ENCODE measurements at regions of chr1 and their contacts with region 1.

Region 1: GRCh38 chr1:84433258-84434080 is 35.2 kb downstream of the DNASE2B start:
- DNase-seq: peak; percentile 72
- ATAC-seq: peak; percentile 76
- H3K4me3 Mint-ChIP-seq: peak overlapping the region; percentile 64
- H3K27ac Mint-ChIP-seq: peak overlapping the region; percentile 45
- H3K4me1 Mint-ChIP-seq: peaks cover 7% of the 10 kb centered on the region
- H3K27me3 Mint-ChIP-seq: no peaks in the 10 kb centered on the region
- CTCF ChIP-seq: peak; percentile 73

Region 2: GRCh38 chr1:83905315-83905907 is 528.1 kb before region 1 on chr1:
- CTCF ChIA-PET with region 1: interaction called, 4 read pairs
- POLR2A ChIA-PET with region 1: no interaction called
- intact Hi-C with region 1: loop called (anchors 10 kb)
- DNase-seq: peak; percentile 5
- ATAC-seq: no peak
- H3K4me3 Mint-ChIP-seq: no peak overlapping the region
- H3K27ac Mint-ChIP-seq: no peak overlapping the region
- H3K4me1 Mint-ChIP-seq: no peaks in the 10 kb centered on the region
- H3K27me3 Mint-ChIP-seq: peaks cover 14% of the 10 kb centered on the region
- CTCF ChIP-seq: peak; percentile 80

Region 3: DNA sequence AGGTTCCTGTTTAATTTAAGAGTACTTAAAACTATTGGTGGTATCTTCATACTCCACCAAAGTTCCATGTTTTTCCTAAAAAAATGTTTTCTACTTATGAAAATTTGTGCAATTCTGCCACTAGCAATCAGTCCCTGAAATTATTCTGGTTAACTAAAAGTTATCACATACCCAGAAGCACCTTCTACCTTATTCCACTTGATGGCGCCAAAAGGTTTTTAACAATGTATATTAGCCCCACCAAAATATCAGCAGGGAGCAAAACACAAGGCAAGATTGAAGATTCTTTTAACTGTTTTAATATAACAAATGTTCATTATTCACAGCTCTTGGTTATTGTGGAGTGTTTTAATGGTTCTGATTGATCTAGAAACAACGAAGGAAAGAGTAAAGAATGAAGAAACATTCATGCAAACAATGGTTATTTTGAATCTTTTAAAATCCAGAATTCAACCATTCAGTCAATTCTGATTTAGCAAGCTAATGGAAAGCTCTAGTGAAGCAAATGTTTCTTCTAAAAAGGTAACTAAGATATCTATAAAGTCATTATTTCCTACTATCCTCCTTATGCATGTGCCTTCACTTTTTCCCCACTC is 501.7 kb before region 1 on chr1:
- CTCF ChIA-PET with region 1: interaction called, 6 read pairs
- POLR2A ChIA-PET with region 1: no interaction called
- intact Hi-C with region 1: loop called (anchors 10 kb)
- DNase-seq: peak; percentile 25
- ATAC-seq: peak; percentile 73
- H3K4me3 Mint-ChIP-seq: no peak overlapping the region
- H3K27ac Mint-ChIP-seq: no peak overlapping the region
- H3K4me1 Mint-ChIP-seq: no peaks in the 10 kb centered on the region
- H3K27me3 Mint-ChIP-seq: peaks cover 5% of the 10 kb centered on the region
- CTCF ChIP-seq: peak; percentile 75

Region 4: DNA sequence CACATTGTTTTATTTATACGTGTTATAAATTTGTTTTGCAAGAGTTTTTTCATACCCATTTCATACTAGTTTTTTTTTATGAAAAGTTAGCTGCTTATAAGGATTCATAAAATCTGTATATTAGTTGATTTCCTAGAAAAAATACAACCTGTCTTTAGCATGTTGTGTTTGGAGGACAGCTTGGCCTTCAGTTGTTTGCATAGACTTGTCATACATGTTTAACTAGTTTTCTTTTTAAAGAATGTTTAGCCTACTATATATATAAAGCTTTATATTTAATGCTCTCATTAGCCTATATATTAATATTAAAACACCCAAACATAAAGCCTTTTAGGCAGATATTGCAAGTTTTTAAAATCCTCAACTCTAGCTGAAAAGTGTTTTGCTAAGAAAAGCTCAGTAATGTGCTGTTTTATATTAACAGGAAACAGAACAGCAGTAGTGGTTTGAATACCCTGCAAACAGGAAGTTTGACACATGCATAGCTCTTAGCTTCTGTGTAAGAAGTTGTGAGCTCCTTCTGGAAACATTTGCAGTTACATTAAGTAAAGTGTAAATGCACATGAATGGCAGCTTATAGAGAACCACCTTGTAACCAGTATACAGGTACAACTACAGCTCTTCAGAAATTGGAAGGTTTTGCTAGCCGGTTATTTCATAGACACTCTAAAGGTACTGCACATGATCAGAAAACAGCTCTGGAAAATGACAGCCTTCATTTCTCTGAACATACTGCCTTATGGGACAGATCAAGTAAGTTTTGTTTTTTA is 289.5 kb before region 1 on chr1 and contains the start of gene PRKACB:
- CTCF ChIA-PET with region 1: interaction called, 157 read pairs
- POLR2A ChIA-PET with region 1: interaction called, 3 read pairs
- intact Hi-C with region 1: loop called (anchors 2 kb)
- DNase-seq: no peak
- ATAC-seq: peak; percentile 89
- H3K4me3 Mint-ChIP-seq: peak within 1 kb of the TSS; percentile 83
- H3K27ac Mint-ChIP-seq: peak within 1 kb of the TSS; percentile 99
- H3K4me1 Mint-ChIP-seq: peaks cover 30% of the 10 kb centered on the region
- H3K27me3 Mint-ChIP-seq: no peaks in the 10 kb centered on the region
- CTCF ChIP-seq: no peak
- total RNA-seq, gene PRKACB: 39.9 to 44.7 TPM

Region 5: DNA sequence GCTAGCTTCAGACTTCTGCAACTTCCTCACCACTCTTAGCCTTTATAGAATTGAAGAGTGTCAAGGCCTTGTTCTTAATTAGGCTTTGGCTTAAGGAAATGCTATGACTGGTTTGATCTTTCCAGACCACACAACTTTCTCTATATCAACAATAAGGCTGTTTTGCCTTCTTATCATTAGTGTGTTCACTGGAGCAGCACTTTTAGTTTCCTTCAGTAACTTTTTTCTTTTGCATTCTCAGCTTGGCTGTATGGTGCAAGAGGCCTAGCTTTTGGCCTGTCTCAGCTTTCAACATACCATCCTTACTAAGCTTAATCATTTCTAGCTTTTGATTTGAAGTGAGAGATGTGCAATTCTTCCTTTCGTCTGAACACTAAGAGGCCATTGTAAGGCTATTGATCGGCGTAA is 280.8 kb before region 1 on chr1:
- CTCF ChIA-PET with region 1: interaction called, 157 read pairs
- POLR2A ChIA-PET with region 1: interaction called, 3 read pairs
- intact Hi-C with region 1: no loop called
- DNase-seq: peak; percentile 37
- ATAC-seq: peak; percentile 70
- H3K4me3 Mint-ChIP-seq: peak overlapping the region; percentile 36
- H3K27ac Mint-ChIP-seq: peak overlapping the region; percentile 81
- H3K4me1 Mint-ChIP-seq: peaks cover 83% of the 10 kb centered on the region
- H3K27me3 Mint-ChIP-seq: no peaks in the 10 kb centered on the region
- CTCF ChIP-seq: no peak

Region 6: GRCh38 chr1:84450910-84451309 is 17.4 kb after region 1 on chr1:
- CTCF ChIA-PET with region 1: no interaction called
- POLR2A ChIA-PET with region 1: no interaction called
- intact Hi-C with region 1: no loop called
- DNase-seq: no peak
- ATAC-seq: no peak
- H3K4me3 Mint-ChIP-seq: no peak overlapping the region
- H3K27ac Mint-ChIP-seq: no peak overlapping the region
- H3K4me1 Mint-ChIP-seq: no peaks in the 10 kb centered on the region
- H3K27me3 Mint-ChIP-seq: peaks cover 7% of the 10 kb centered on the region
- CTCF ChIP-seq: no peak

Region 7: DNA sequence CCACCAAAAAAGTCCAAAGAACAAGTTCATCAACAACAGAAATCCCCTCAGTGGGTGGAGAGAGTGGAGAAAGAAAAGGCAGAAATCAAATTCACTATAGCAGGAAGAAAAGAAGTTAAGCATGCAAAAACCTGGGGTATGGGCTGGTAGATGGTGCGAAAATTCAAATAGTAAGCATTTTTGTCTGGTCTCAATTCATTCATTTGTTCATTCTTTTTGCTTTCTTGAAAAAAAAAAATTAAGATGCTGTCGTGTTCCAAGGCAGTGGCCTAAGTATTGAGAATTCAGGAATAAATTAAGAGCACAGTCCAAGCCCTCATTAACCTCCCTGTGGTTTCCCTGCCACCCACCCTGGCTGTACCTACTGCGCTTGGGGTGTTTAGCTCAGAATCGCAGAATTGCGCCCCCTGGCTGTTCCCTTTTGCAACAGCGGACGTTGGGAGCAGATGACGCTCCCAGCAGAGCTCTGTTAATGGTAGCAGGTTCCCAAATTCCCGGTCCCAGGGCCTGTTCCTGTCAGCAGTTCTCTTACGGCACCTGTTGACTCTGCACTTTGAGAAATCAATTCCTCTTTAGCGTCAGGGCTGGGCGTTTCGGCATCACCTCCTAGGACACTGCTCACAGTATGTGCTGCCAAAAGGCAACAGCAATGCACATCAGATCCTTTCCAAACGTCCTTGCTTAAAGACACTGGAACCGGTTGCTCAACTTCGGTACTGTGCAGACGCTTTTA is 290.8 kb after region 1 on chr1:
- CTCF ChIA-PET with region 1: interaction called, 10 read pairs
- POLR2A ChIA-PET with region 1: no interaction called
- intact Hi-C with region 1: no loop called
- DNase-seq: peak; percentile 68
- ATAC-seq: peak; percentile 75
- H3K4me3 Mint-ChIP-seq: no peak overlapping the region
- H3K27ac Mint-ChIP-seq: no peak overlapping the region
- H3K4me1 Mint-ChIP-seq: peaks cover 9% of the 10 kb centered on the region
- H3K27me3 Mint-ChIP-seq: no peaks in the 10 kb centered on the region
- CTCF ChIP-seq: peak; percentile 78

Measured in activated CD8-positive, alpha-beta T cell treated with anti-CD3 and anti-CD28 coated beads for 36 hours (primary cell).